ENCODE measurements at regions of chr11 and their contacts with region 1.

Region 1: DNA sequence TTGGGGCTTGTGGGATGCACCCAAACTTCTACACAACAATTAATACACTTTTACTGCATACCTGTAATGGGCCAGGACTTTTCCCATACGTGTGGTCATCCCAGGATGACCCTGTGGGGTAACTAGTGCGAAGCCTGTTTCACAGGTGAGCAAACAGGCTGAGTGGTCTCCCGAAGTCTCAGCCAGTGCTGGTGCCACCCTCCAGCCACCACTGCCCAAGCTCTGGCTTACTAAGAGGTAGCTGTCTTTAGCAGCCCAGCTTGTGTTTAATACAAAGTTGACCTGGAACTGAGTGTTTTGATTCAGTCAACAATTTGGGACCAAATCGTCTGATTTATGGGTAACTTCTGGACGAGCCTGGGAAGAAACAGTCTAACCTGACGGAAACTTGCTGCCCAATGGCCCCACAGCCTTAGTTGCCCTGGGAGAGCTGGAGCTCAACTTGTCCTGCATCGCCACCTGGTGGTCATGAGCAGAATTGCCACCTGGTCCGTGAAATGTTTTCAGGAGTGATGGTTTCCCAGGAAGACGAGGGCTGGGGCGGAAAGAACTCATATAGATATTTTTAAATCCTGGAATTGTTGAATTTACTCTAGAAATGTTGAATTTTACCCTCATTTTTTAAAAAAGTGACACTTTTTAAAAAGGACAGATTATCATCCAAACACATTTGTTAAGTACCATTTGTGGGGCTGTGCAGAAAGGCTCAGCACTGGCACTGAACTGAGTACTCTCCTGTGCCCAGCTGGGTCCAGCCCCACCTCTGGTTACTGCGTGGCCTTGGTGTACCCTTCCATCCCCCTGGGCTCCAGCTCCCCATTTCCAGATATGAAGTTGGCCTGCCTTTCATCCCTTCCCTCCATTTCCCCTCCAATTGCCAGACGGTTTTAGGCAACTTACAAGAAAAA is 95.5 kb upstream of the PARVA start:
- DNase-seq: peak; percentile 86 to 88 (median 87)
- ATAC-seq: peak; percentile 89
- H3K4me3 ChIP-seq: no peak overlapping the region
- H3K27ac ChIP-seq: no peak overlapping the region
- H3K4me1 ChIP-seq: peaks cover 8 to 13% of the 10 kb centered on the region in 2 experiments; a peak in 4 of 5 replicates
- H3K27me3 ChIP-seq: no peaks in the 10 kb centered on the region; a peak in 1 of 5 replicates
- CTCF ChIP-seq: peak; percentile 92 to 98 (median 98)
- EP300 ChIP-seq: no peak
- POLR2A ChIP-seq: no peak
- RAD21 ChIP-seq: peak; percentile 99

Region 2: GRCh38 chr11:12087075-12088004 is 194.5 kb before region 1 on chr11:
- CTCF ChIA-PET with region 1: interaction called, 23 read pairs
- POLR2A ChIA-PET with region 1: no interaction called
- in situ Hi-C with region 1: no loop called
- intact Hi-C with region 1: loop called (anchors 1 kb)
- DNase-seq: peak in 2 of 4 experiments; percentile 28 to 31
- ATAC-seq: peak; percentile 58
- H3K4me3 ChIP-seq: no peak overlapping the region
- H3K27ac ChIP-seq: no peak overlapping the region
- H3K4me1 ChIP-seq: peaks cover 14 to 20% of the 10 kb centered on the region in 2 experiments
- H3K27me3 ChIP-seq: peaks cover 0 to 9% of the 10 kb centered on the region in 2 experiments; a peak in 1 of 5 replicates
- CTCF ChIP-seq: no peak
- EP300 ChIP-seq: no peak
- POLR2A ChIP-seq: no peak
- RAD21 ChIP-seq: no peak